Activated T-helper 1 cell treated with anti-CD3 and anti-CD28 coated beads, Interleukin-12 subunit alpha, Interleukin-12 subunit beta, Interleukin-2, Interleukin-4 antibody, amounts not matched to agents 30 ng/mL and 10 ng/mL and 1 ng/mL, durations not matched to agents 14 hours and 24 hours and 36 hours (primary cell): ENCODE measurements at regions of chr10 and their contacts with region 1.

Region 1: DNA sequence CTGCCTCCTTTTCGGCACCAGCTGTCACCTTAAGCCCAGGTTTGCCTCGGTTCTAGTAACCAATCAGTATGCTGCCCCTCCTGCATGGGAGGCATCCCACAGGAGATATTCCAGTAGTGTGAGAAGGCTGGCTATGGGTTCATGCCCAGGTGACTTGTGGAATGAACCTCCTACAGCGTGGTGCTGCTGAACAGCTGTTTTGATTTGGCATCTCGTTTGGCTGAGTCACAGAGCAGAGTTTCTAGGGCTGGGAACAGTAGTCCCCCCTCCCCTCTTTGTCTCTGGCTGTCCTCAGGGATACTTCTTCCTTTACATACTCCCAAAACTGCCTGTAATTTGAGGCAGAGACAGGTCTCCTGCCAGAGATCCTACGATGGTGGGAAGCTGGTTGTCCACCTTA is 16.1 kb downstream of the R3HCC1L start:
- DNase-seq: no peak
- H3K4me3 Mint-ChIP-seq: no peak overlapping the region
- H3K27ac Mint-ChIP-seq: no peak overlapping the region
- H3K4me1 Mint-ChIP-seq: peaks cover 6% of the 10 kb centered on the region
- H3K27me3 Mint-ChIP-seq: no peaks in the 10 kb centered on the region

Region 2: GRCh38 chr10:98074315-98074911 is 76.1 kb before region 1 on chr10:
- intact Hi-C with region 1: no loop called
- DNase-seq: no peak
- H3K4me3 Mint-ChIP-seq: no peak overlapping the region
- H3K27ac Mint-ChIP-seq: no peak overlapping the region
- H3K4me1 Mint-ChIP-seq: no peaks in the 10 kb centered on the region
- H3K27me3 Mint-ChIP-seq: no peaks in the 10 kb centered on the region

Region 3: GRCh38 chr10:98119891-98120290 is 30.7 kb before region 1 on chr10:
- intact Hi-C with region 1: no loop called
- DNase-seq: no peak
- H3K4me3 Mint-ChIP-seq: no peak overlapping the region
- H3K27ac Mint-ChIP-seq: no peak overlapping the region
- H3K4me1 Mint-ChIP-seq: no peaks in the 10 kb centered on the region
- H3K27me3 Mint-ChIP-seq: peaks cover 18% of the 10 kb centered on the region

Region 4: GRCh38 chr10:98163941-98164340 is 13.4 kb after region 1 on chr10:
- intact Hi-C with region 1: loop called (anchors 2 kb)
- DNase-seq: no peak
- H3K4me3 Mint-ChIP-seq: no peak overlapping the region
- H3K27ac Mint-ChIP-seq: peak overlapping the region; percentile 14
- H3K4me1 Mint-ChIP-seq: peaks cover under 1% of the 10 kb centered on the region
- H3K27me3 Mint-ChIP-seq: no peaks in the 10 kb centered on the region